MCF 10A (cell line): ENCODE measurements at regions of chr13 and their contacts with region 1.

Region 1: GRCh38 chr13:97386801-97387484 is 47.0 kb upstream of the RAP2A start:
- DNase-seq: no peak
- H3K4me3 Mint-ChIP-seq: no peak overlapping the region
- H3K27ac Mint-ChIP-seq: no peak overlapping the region
- H3K4me1 Mint-ChIP-seq: peaks cover 8% of the 10 kb centered on the region
- H3K27me3 Mint-ChIP-seq: no peaks in the 10 kb centered on the region
- CTCF ChIP-seq: no peak

Region 2: DNA sequence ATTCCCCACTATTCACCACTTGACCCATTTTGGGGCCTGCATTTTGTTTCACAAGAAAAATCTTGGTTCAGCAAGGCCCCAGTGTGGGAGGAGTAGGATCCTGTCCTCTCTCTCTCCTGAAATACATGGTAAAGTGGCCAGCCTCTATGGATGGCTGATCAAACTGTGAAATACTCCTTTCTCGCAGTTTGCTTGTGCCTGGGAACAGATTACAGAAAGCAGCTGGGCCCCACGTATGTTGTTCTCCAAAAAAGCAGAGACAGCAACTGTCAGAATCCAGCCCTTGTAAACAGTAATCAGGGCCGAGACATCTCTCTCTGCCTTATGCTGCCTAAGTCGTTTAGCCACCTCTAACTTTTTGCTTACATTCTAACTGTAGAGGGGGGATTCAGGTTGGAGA is 14.0 kb before region 1 on chr13:
- CTCF ChIA-PET with region 1: interaction called, 12 read pairs
- POLR2A ChIA-PET with region 1: interaction called, 6 read pairs
- intact Hi-C with region 1: no loop called
- DNase-seq: no peak
- H3K4me3 Mint-ChIP-seq: no peak overlapping the region
- H3K27ac Mint-ChIP-seq: no peak overlapping the region
- H3K4me1 Mint-ChIP-seq: peaks cover 6% of the 10 kb centered on the region
- H3K27me3 Mint-ChIP-seq: no peaks in the 10 kb centered on the region
- CTCF ChIP-seq: no peak